T-cell (primary cell): ENCODE measurements at regions of chr12 and their contacts with region 1.

Region 1: DNA sequence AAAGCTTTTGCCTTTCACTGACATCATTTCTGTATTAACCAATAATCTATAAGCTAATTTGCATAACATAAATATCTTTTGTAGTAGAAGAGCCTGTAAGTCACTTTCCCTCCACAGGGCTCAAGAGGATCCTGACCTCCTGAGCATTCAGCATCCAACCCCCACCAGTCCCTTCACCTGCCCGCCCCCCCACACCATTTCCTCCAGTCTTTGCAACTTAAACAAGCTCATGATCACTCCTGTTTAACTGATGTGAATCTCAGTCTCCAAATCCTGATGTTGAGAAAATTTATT is 12.0 kb upstream of the CRY1 start:
- DNase-seq: no peak
- ATAC-seq: no peak
- H3K4me3 ChIP-seq: no peak overlapping the region
- H3K4me3 Mint-ChIP-seq: no peak overlapping the region
- H3K27ac ChIP-seq: no peak overlapping the region
- H3K27ac Mint-ChIP-seq: no peak overlapping the region
- H3K4me1 ChIP-seq: peaks cover 0 to 2% of the 10 kb centered on the region in 2 experiments
- H3K4me1 Mint-ChIP-seq: peaks cover 0 to 2% (median 0%) of the 10 kb centered on the region in 3 donors
- H3K27me3 ChIP-seq: no peaks in the 10 kb centered on the region
- H3K27me3 Mint-ChIP-seq: peaks cover 3 to 27% of the 10 kb centered on the region in 2 donors

Region 2: DNA sequence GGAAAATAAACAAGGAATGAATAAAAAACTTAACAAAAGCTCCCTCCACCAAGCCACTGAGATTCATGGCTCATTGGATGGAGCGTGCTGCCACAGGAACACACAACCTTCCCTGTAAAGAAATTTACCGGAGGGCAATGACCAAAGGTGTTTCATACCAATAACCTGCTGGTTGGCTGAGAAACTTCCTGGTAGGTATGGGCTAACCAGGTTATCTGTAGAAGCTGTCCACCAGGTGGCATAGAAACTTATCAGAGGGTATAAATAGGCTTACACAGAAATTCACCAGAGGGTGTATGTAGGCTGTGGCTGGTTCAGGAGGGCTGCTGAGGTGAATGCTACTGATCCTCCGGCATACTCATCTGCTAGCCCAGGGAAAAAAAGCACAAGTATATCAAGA is 91.3 kb before region 1 on chr12:
- CTCF ChIA-PET with region 1: interaction called in 1 of 2 experiments, 13 read pairs
- POLR2A ChIA-PET with region 1: no interaction called
- DNase-seq: peak in 12 of 35 experiments; percentile 1 to 55 (median 11)
- ATAC-seq: peak in 3 of 4 experiments; percentile 54 to 69 (median 60)
- H3K4me3 ChIP-seq: no peak overlapping the region
- H3K4me3 Mint-ChIP-seq: no peak overlapping the region
- H3K27ac ChIP-seq: no peak overlapping the region
- H3K27ac Mint-ChIP-seq: no peak overlapping the region
- H3K4me1 ChIP-seq: no peaks in the 10 kb centered on the region
- H3K4me1 Mint-ChIP-seq: peaks cover 0 to 2% (median 0%) of the 10 kb centered on the region in 3 donors
- H3K27me3 ChIP-seq: no peaks in the 10 kb centered on the region
- H3K27me3 Mint-ChIP-seq: no peaks in the 10 kb centered on the region

Region 3: GRCh38 chr12:107057071-107057818 is 48.1 kb before region 1 on chr12:
- CTCF ChIA-PET with region 1: interaction called in 1 of 2 experiments, 12 read pairs
- POLR2A ChIA-PET with region 1: no interaction called
- DNase-seq: no peak
- ATAC-seq: no peak
- H3K4me3 ChIP-seq: no peak overlapping the region
- H3K4me3 Mint-ChIP-seq: no peak overlapping the region
- H3K27ac ChIP-seq: no peak overlapping the region
- H3K27ac Mint-ChIP-seq: peak overlapping the region in 1 of 2 donors; percentile 22
- H3K4me1 ChIP-seq: no peaks in the 10 kb centered on the region
- H3K4me1 Mint-ChIP-seq: peaks cover 14 to 25% (median 14%) of the 10 kb centered on the region in 3 donors
- H3K27me3 ChIP-seq: no peaks in the 10 kb centered on the region
- H3K27me3 Mint-ChIP-seq: no peaks in the 10 kb centered on the region

Region 4: DNA sequence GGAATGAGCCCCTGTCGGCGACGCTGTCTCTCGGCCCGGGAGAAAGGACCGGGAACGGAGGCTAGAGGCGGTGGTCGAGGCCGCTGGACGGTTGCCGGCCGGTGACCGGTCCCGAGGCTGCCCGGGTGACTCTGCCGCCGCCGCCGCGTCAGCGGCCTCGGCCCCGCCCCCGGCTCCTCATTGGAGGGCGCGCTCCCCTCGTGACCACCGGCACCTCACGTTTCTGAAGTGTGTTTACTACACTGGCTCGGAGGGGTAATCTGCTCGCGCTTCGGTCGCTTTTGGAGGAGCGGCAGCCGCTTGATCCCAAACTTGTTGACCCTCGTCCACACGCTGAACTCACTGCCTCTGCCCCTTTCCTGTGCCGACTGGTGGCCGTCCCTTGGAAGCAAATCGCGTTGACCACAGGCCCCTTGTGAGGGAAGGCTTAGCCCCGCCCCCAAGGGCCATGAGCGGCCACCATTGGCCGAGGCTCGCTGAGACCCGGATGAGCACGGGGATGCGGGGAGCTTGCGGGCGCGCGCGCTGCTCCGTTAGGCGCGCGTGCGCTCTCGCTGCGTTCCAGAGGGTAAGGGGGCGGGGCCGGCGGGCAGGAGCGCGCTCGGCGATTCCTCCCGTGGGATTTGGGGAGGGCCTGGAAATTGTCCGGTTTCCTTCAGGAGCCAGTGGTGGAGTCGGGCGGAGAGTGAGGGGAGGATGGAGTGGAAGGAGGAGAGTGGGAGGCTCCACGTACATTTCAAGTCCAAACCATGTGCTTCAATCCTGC is 11.8 kb before region 1 on chr12 and contains the start of gene CRY1:
- CTCF ChIA-PET with region 1: interaction called, 7 to 24 read pairs
- POLR2A ChIA-PET with region 1: interaction called in 1 of 2 experiments, 5 read pairs
- DNase-seq: peak; percentile 79 to 95 (median 90)
- ATAC-seq: peak; percentile 82 to 86 (median 84)
- H3K4me3 ChIP-seq: peak within 1 kb of the TSS; percentile 83 to 100
- H3K4me3 Mint-ChIP-seq: no peak within 1 kb of the TSS
- H3K27ac ChIP-seq: peak within 1 kb of the TSS; percentile 100
- H3K27ac Mint-ChIP-seq: peak within 1 kb of the TSS in 1 of 2 donors; percentile 100
- H3K4me1 ChIP-seq: peaks cover 8 to 28% of the 10 kb centered on the region in 2 experiments
- H3K4me1 Mint-ChIP-seq: peaks cover 13 to 16% (median 15%) of the 10 kb centered on the region in 3 donors
- H3K27me3 ChIP-seq: no peaks in the 10 kb centered on the region
- H3K27me3 Mint-ChIP-seq: peaks cover 5 to 13% of the 10 kb centered on the region in 2 donors
- total RNA-seq, gene CRY1: 31.4 to 58.1 (median 35.9) TPM

Region 5: DNA sequence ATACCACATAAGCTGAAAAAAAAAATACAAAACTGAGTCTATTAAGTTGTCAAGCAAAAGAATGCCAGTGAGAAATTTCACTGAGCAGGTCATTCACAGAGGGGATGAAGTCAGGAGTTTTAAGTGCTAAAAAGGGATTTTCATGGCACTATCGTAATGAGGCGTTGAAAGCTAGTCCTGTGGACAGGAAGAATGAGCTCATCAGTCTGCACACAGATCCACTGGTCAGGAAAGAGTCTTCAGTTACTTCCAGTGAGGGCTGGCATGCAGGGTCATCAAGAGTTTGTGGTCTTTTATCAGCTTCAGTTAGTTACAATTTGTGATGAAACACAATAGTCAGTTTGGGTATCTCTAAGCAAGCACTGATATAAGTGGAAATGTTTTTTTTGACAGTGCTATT is 935.6 kb after region 1 on chr12:
- CTCF ChIA-PET with region 1: no interaction called
- POLR2A ChIA-PET with region 1: no interaction called
- DNase-seq: no peak
- ATAC-seq: no peak
- H3K4me3 ChIP-seq: no peak overlapping the region
- H3K4me3 Mint-ChIP-seq: no peak overlapping the region
- H3K27ac ChIP-seq: no peak overlapping the region
- H3K27ac Mint-ChIP-seq: no peak overlapping the region
- H3K4me1 ChIP-seq: no peaks in the 10 kb centered on the region
- H3K4me1 Mint-ChIP-seq: peaks cover 0 to 5% (median 1%) of the 10 kb centered on the region in 3 donors
- H3K27me3 ChIP-seq: peaks cover 0 to 2% of the 10 kb centered on the region in 2 experiments
- H3K27me3 Mint-ChIP-seq: peaks cover 15 to 17% of the 10 kb centered on the region in 2 donors

Region 6: DNA sequence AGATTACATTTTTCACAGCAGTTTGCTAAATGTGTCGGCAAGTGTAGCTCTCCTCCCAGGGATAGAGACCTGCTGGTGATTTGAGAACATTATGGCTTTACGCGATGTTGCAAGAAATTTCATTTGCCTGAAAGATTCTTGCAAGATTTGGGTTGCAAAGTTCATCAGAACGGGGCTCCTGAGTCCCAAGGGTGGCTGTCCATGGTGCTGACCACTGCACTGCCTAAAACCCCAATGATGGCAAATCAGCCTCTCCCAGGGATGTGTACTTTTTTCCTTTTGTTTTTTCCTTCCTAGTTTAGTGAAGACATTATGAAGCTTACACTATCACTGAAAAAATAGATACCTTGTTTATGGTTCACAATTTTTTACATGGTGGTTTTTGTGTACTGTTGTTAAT is 1109.1 kb after region 1 on chr12:
- CTCF ChIA-PET with region 1: no interaction called
- POLR2A ChIA-PET with region 1: no interaction called
- DNase-seq: peak in 4 of 35 experiments; percentile 3 to 16 (median 6)
- ATAC-seq: no peak
- H3K4me3 ChIP-seq: no peak overlapping the region
- H3K4me3 Mint-ChIP-seq: no peak overlapping the region
- H3K27ac ChIP-seq: no peak overlapping the region
- H3K27ac Mint-ChIP-seq: no peak overlapping the region
- H3K4me1 ChIP-seq: no peaks in the 10 kb centered on the region
- H3K4me1 Mint-ChIP-seq: no peaks in the 10 kb centered on the region
- H3K27me3 ChIP-seq: peaks cover 0 to 22% of the 10 kb centered on the region in 2 experiments
- H3K27me3 Mint-ChIP-seq: peaks cover 37 to 42% of the 10 kb centered on the region in 2 donors